Right ventricle myocardium superior (tissue), 1 donor: ENCODE measurements at regions of chr4 and their contacts with region 1.

Region 1: GRCh38 chr4:20422398-20422797 is 170.7 kb downstream of the SLIT2 start:
- DNase-seq: no peak
- ATAC-seq: peak; percentile 49

Region 2: GRCh38 chr4:20544645-20545044 is 122.2 kb after region 1 on chr4:
- intact Hi-C with region 1: loop called (anchors 5 kb)
- DNase-seq: no peak
- ATAC-seq: peak; percentile 48

Region 3: GRCh38 chr4:20684852-20685763 is 262.7 kb after region 1 on chr4:
- intact Hi-C with region 1: loop called (anchors 10 kb)
- DNase-seq: no peak
- ATAC-seq: no peak